ENCODE measurements at regions of chr1 and their contacts with region 1.

Region 1: GRCh38 chr1:8004803-8005554 is 21.1 kb downstream of the ERRFI1 start:
- DNase-seq: peak; percentile 90 to 98
- H3K4me3 ChIP-seq: peak overlapping the region in 2 of 3 donors; percentile 9 to 29
- H3K27ac ChIP-seq: peak overlapping the region; percentile 88 to 92
- H3K4me1 ChIP-seq: peaks cover 8 to 15% of the 10 kb centered on the region in 2 donors
- H3K27me3 ChIP-seq: no peaks in the 10 kb centered on the region
- CTCF ChIP-seq: peak in 2 of 3 donors; percentile 9 to 14
- POLR2A ChIP-seq: no peak

Region 2: DNA sequence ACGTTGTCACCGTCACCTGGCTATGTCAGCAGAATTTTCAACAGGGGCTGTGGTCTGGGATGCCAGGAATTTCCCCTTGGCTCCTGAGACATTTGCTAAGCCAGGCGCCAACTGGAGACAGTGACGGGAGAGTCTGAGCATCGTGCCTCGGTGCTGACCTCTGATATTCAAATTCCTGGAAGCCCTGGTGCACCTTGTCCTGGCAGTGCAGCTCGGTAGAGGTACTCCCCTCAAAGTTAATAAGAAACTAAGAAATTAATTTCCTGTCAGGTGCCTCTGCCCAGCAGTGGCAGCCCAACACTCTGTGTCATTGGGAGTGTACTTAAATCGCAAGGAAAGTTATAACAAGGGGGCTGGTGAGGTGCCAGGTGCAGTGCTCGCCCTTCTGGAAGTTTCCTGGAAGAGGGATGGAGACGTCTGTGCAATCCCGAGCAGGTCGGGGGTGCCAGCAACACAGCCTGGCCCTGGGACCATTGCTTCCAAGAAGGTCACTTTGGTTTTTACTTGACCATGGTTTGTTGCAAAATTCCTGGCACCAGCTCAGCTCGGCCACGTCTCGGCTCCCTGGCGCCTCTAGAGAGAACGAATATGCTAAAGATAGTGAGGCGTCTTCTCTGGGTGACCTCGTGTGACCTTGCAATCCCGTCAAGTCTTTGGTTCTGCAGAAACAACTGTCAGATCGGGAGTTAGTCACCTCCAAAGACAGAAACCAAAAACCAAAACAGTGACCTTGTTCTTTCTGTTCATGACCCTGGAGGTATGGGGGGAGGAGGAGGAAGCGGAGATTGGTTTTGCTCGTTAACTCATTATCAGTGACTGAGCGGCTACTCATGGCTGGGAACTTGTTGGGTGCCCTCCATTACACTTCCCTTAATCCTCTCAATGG is 383.4 kb before region 1 on chr1:
- intact Hi-C with region 1: no loop called
- DNase-seq: no peak
- H3K4me3 ChIP-seq: no peak overlapping the region
- H3K27ac ChIP-seq: no peak overlapping the region
- H3K4me1 ChIP-seq: no peaks in the 10 kb centered on the region
- H3K27me3 ChIP-seq: no peaks in the 10 kb centered on the region
- CTCF ChIP-seq: no peak
- POLR2A ChIP-seq: no peak

Region 3: GRCh38 chr1:8516793-8517556 is 512.0 kb after region 1 on chr1:
- intact Hi-C with region 1: loop called (anchors 5 kb)
- DNase-seq: no peak
- H3K4me3 ChIP-seq: no peak overlapping the region
- H3K27ac ChIP-seq: peak overlapping the region in 1 of 2 donors; percentile 29
- H3K4me1 ChIP-seq: no peaks in the 10 kb centered on the region
- H3K27me3 ChIP-seq: no peaks in the 10 kb centered on the region
- CTCF ChIP-seq: no peak
- POLR2A ChIP-seq: no peak

Region 4: DNA sequence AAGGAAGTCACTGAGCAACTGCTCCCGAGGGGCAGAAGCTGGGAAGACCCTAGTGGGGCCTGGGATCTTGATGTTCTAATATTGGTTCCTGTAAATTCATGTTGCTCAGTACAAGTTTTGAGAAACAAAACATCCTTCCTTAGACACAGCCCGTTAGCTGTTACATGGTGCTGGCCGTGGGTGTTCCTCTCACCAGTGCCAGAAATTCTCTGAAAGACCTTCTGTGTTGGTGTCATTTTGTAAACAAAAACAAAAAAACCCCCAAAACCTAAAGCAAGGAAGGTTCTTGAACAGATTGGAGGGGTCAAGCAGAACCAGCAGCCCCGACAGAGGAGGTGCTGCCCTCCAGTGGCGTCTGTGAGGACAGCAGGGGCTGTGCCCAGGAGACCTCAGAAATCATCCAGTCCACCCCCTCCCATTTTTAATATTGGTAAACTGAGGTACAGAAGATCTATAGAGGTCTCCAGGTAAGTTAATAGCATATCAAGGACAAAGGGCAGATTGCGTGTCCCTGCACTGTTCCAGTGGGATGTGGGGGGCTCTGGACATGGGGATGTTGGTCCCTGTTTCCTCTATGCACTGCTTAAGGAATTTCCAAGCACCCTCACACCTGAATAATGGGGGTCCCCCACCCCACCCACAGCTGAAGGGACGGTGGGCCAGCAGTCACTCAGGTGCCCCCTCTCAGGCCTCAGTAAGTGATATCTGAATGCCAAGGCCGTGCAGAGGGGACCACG is 983.1 kb after region 1 on chr1:
- intact Hi-C with region 1: loop called (anchors 5 kb)
- DNase-seq: peak in 1 of 2 donors; percentile 44
- H3K4me3 ChIP-seq: no peak overlapping the region
- H3K27ac ChIP-seq: peak overlapping the region; percentile 22 to 45
- H3K4me1 ChIP-seq: no peaks in the 10 kb centered on the region
- H3K27me3 ChIP-seq: no peaks in the 10 kb centered on the region
- CTCF ChIP-seq: peak; percentile 70 to 91 (median 74)
- POLR2A ChIP-seq: no peak

Region 5: DNA sequence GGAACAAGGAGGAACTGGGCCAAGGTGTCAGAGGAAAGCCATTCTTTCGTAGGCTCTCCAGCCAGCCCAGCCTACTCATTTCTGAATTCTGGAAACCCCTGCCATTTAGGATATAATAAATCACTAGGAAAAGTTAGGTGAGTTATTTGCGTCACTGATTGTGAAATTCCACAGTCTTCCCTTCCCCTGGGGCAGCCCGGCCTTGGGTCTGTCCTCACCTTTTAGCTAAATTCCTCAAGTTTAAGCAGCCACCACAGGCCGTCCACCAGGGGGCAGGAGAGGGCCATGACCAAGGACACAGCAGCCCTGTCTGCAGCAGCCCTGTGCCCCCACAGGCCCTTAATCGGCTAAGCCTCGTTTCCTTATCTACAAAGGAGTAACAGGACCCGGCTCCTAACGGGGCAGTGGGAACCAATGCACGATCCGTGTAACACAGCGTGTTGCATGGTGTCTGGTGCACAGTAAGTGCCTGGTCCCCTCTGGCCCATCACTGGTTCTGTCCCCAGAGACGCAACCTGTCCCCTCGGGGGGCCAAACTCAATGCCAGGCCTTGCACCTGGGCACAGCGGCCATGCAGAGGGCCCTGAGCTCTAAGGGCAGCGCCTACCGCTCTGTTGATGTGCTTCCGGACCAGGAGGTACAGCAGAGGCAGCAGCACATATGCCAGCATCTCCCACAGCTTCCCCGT is 1105.8 kb after region 1 on chr1:
- intact Hi-C with region 1: no loop called
- DNase-seq: peak; percentile 88 to 89
- H3K4me3 ChIP-seq: no peak overlapping the region
- H3K27ac ChIP-seq: peak overlapping the region in 1 of 2 donors; percentile 25
- H3K4me1 ChIP-seq: no peaks in the 10 kb centered on the region
- H3K27me3 ChIP-seq: no peaks in the 10 kb centered on the region
- CTCF ChIP-seq: peak; percentile 86 to 96 (median 95)
- POLR2A ChIP-seq: no peak

Measured in breast epithelium (tissue), 4 donors.